Ovary (tissue), 10 donors: ENCODE measurements at regions of chr1 and their contacts with region 1.

Region 1: DNA sequence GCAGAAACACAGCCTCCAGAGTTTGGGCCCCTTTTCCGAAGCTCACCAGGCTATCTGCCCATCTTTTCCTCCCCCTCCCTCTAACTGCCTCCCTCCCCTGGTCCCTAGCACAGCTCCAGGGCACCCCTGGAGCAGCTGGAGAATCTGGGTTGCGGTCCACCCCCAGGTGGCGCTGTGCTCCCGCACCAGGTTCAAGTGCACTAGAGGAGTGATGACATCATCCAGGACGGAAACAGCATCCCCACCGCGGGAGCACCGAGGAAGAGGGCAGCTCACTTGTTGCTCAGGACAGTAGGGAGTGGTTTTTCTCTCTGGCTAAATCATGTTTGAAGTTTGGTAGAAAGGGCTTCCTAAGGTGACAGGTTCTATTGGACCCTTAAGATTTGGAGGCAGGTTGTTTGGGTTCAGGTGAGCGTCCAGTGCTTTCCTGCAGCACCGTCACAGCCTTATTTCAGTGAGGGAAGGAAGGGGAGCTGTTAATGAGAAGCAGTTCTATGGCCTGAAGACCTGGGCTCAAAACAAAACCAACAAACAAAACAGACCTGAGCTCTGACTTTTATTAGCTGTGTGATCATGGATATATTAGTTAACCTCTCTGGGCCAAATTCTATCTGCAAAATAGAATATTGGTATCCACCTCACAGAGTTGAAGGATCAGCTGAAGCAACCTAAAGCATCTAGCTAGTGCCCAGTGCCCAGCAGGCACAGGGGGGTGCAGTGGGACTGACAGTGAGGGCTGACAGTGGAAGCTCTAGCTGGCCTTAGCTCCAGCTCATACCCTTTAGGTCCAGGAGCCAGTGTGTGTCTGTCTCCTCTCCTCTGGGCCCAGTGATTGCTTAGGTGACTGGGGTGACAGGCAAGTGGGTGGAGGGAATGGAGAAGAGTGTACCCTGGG is 7.5 kb downstream of the SHISA4 start:
- DNase-seq: peak; percentile 91 to 95 (median 95)
- H3K4me3 ChIP-seq: no peak overlapping the region
- H3K27ac ChIP-seq: peak overlapping the region; percentile 73 to 74
- H3K4me1 ChIP-seq: peaks cover 15% of the 10 kb centered on the region
- H3K27me3 ChIP-seq: no peaks in the 10 kb centered on the region
- CTCF ChIP-seq: peak; percentile 72 to 99 (median 98)
- EP300 ChIP-seq: no peak
- POLR2A ChIP-seq: peak; percentile 24

Region 2: DNA sequence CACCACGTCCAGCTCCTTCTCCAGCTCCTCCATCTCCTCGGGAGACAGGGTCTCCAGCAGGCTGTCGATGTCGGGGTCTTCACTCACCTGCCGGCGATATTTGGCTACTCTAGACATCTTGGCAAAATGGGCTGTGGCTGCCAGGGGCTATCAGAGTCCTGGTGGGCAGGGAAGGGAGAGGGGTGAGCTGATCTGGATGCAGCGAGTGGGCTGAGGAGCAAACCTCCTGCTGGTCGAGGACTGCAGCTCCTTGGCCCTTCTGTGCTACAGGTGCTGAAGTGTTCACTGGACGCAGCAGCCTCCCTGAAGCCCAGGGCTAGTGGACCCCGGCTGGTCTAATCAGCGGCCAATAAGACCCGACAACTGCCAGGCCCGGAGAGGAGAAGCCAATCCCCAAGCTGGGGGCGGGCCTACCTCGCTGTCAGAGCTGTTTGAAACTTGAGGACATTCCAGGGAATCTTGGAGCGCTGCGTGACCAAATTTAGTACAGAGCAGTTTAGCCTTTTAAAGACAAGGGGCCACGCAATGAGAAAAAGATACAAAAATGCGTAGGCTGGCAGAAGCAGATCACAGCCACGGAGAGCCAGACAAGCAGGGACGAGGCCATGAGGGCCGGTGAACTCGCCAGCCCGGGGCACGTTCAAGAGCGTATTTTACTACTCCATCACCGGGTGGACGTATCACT is 50.2 kb after region 1 on chr1 and contains the start of gene LMOD1:
- intact Hi-C with region 1: loop called in 2 of 4 experiments (anchors 5 kb)
- DNase-seq: peak; percentile 89 to 95 (median 93)
- H3K4me3 ChIP-seq: peak within 1 kb of the TSS; percentile 75
- H3K27ac ChIP-seq: peak within 1 kb of the TSS; percentile 73 to 89
- H3K4me1 ChIP-seq: peaks cover 15% of the 10 kb centered on the region
- H3K27me3 ChIP-seq: no peaks in the 10 kb centered on the region
- CTCF ChIP-seq: peak in 1 of 3 donors; percentile 13
- EP300 ChIP-seq: peak; percentile 36
- POLR2A ChIP-seq: peak; percentile 83
- total RNA-seq, gene LMOD1: 25.6 to 155 (median 67.2) TPM

Region 3: GRCh38 chr1:201970334-201971159 is 74.4 kb after region 1 on chr1:
- intact Hi-C with region 1: loop called (anchors 2 to 5 kb)
- DNase-seq: no peak
- H3K4me3 ChIP-seq: no peak overlapping the region
- H3K27ac ChIP-seq: no peak overlapping the region
- H3K4me1 ChIP-seq: peaks cover 5% of the 10 kb centered on the region
- H3K27me3 ChIP-seq: no peaks in the 10 kb centered on the region
- CTCF ChIP-seq: no peak
- EP300 ChIP-seq: no peak
- POLR2A ChIP-seq: no peak

Region 4: GRCh38 chr1:201982623-201983379 is 86.6 kb after region 1 on chr1 and contains the start of gene RNPEP:
- intact Hi-C with region 1: loop called in 1 of 4 experiments (anchors 5 kb)
- DNase-seq: peak; percentile 67 to 83 (median 78)
- H3K4me3 ChIP-seq: peak within 1 kb of the TSS; percentile 76
- H3K27ac ChIP-seq: peak within 1 kb of the TSS; percentile 76 to 92
- H3K4me1 ChIP-seq: peaks cover 3% of the 10 kb centered on the region
- H3K27me3 ChIP-seq: no peaks in the 10 kb centered on the region
- CTCF ChIP-seq: peak in 1 of 3 donors; percentile 10
- EP300 ChIP-seq: no peak
- POLR2A ChIP-seq: peak; percentile 61
- total RNA-seq, gene RNPEP: 37.5 to 76.2 (median 43.9) TPM

Region 5: DNA sequence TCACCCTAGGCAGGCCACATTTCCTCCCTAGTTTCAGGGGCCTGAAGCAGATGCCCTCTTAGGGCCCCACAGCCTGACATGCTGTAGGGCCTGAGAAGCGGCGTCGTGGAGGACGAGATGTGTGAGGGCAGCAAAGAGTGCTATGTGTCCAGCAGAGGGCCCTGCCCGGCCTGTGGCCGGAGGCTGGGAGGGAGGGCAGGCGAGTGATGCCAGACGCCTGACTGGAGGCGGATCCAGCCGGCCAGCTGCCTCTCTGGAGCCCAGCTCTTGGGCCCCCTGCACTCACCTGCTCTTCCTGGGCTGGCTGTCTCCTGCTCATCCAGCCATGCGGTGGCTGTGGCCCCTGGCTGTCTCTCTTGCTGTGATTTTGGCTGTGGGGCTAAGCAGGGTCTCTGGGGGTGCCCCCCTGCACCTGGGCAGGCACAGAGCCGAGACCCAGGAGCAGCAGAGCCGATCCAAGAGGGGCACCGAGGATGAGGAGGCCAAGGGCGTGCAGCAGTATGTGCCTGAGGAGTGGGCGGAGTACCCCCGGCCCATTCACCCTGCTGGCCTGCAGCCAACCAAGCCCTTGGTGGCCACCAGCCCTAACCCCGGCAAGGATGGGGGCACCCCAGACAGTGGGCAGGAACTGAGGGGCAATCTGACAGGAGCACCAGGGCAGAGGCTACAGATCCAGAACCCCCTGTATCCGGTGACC is 226.6 kb after region 1 on chr1 and contains the start of gene GPR37L1:
- intact Hi-C with region 1: loop called in 1 of 4 experiments (anchors 10 kb)
- DNase-seq: peak in 4 of 5 donors; percentile 56 to 79 (median 58)
- H3K4me3 ChIP-seq: no peak within 1 kb of the TSS
- H3K27ac ChIP-seq: no peak within 1 kb of the TSS
- H3K4me1 ChIP-seq: no peaks in the 10 kb centered on the region
- H3K27me3 ChIP-seq: no peaks in the 10 kb centered on the region
- CTCF ChIP-seq: peak in 2 of 3 donors; percentile 12 to 39
- EP300 ChIP-seq: no peak
- POLR2A ChIP-seq: no peak
- total RNA-seq, gene GPR37L1: 0.10 to 0.34 (median 0.13) TPM in 5 of 7 donors, not detected in the others

Region 6: GRCh38 chr1:202135221-202135721 is 239.1 kb after region 1 on chr1:
- intact Hi-C with region 1: loop called in 1 of 4 experiments (anchors 10 kb)
- DNase-seq: peak; percentile 50 to 77 (median 66)
- H3K4me3 ChIP-seq: no peak overlapping the region
- H3K27ac ChIP-seq: peak overlapping the region; percentile 57 to 93
- H3K4me1 ChIP-seq: peaks cover 18% of the 10 kb centered on the region
- H3K27me3 ChIP-seq: no peaks in the 10 kb centered on the region
- CTCF ChIP-seq: peak; percentile 64 to 88 (median 78)
- EP300 ChIP-seq: no peak
- POLR2A ChIP-seq: no peak